Ascending aorta (tissue), 2 donors: ENCODE measurements at regions of chr4 and their contacts with region 1.

Region 1: DNA sequence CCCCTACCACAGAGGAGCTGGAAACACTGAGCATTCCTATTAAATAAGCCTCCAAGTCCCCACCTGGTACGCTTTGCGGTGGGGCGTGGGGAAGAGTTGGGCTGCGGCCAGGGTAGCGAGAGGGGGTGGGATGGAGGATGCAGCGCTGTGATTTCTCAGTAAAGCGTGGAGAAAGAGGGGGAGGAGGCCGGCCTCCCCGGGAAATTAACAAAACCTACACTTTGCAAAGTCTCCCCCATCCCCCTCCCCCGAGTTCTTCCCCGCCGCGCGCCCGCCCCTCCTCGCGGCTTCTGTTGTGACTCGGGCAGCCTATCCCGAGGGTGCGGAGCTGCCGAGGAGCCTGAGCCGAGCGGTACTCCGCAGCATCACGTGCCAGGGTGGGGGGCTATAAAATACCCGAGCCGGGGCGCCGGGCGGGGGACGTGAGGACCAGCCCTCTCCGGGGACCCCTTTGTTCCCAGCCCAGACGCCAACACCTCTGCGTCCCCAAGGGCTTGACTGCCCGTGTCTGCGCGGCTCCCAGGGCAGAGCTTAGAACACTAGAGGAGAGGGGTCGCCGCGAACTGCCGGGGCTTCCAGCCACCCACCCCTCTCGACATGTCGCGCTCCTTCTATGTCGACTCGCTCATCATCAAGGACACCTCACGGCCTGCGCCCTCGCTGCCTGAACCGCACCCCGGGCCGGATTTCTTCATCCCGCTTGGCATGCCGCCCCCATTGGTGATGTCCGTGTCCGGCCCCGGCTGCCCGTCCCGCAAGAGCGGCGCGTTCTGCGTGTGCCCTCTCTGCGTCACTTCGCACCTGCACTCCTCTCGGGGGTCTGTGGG is at the start of gene GSX2:
- DNase-seq: no peak
- H3K4me3 ChIP-seq: peak within 1 kb of the TSS; percentile 50 to 61
- H3K27ac ChIP-seq: no peak within 1 kb of the TSS
- H3K4me1 ChIP-seq: peaks cover 9 to 25% of the 10 kb centered on the region in 2 donors
- H3K27me3 ChIP-seq: peaks cover 14% of the 10 kb centered on the region
- CTCF ChIP-seq: no peak
- total RNA-seq, gene GSX2: not detected

Region 2: DNA sequence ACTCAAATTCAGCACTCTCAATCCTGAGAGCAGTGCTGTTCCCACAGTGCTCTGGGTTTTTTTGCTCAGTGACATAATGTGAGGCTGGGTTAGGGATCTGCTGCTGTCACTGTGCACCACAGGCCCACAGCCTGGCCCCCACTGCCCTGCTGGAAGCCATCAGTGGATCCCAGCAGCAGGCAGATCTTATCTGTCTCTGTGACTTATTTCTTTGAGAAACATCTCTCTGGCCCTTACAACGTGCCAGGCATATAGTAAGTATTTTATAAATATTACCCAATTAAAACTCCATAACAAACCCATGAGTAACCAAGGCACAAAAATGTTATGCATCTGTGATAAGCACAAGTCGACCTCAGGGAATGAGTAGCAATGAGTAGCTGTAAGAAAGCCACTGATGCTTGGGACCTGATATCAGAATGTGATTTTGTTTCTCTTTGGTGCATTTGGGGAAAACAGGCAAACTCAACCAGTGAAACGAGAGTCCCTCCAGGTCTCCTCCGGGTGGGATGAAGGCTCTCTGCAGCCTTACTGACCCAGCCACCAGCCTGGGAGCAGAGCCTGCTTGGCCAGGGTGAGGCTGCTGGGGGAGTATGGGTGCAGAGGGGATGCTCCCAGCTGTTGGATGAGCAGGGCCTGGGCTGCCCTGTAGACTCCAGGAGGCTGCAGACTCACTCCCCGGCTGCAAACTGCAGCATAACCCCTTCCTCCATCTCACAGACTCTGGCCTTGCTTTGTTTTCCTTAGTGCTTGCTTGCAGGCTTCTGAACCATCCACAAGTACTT is 336.0 kb before region 1 on chr4:
- intact Hi-C with region 1: no loop called
- DNase-seq: no peak
- H3K4me3 ChIP-seq: no peak overlapping the region
- H3K27ac ChIP-seq: peak overlapping the region in 1 of 2 donors; percentile 15
- H3K4me1 ChIP-seq: peaks cover 0 to 12% of the 10 kb centered on the region in 2 donors
- H3K27me3 ChIP-seq: no peaks in the 10 kb centered on the region
- CTCF ChIP-seq: no peak

Region 3: GRCh38 chr4:54165438-54165837 is 65.5 kb after region 1 on chr4:
- intact Hi-C with region 1: loop called (anchors 5 kb)
- DNase-seq: no peak
- H3K4me3 ChIP-seq: no peak overlapping the region
- H3K27ac ChIP-seq: peak overlapping the region in 1 of 2 donors; percentile 1
- H3K4me1 ChIP-seq: peaks cover 0 to 9% of the 10 kb centered on the region in 2 donors
- H3K27me3 ChIP-seq: no peaks in the 10 kb centered on the region
- CTCF ChIP-seq: no peak